BJ (cell line): ENCODE measurements at regions of chr3 and their contacts with region 1.

Region 1: DNA sequence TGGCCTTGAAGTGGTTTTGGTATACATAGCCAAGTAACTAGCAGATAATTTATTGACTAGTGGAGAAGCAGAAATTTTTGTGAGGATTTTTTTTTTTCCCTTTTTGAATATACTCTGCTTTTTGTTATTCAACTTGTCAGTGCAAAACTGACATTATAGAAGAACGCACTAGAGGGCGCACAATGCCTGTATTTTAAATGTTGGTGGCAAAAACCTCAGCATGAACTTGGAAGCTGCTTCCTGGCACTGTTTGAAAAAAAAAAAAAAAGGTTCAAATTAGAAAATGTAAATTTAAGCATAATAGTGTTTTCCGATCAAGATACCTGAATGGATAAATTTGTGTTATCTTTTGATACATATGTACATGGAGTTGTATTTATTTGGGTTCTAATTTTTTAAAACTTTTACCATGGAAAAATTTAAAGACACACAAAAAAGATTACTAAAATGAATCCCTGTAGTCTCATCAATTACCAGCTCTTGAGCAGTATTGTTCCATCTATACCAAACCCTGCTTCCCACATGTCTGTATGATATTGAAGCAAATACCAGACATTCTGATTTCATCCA is 56.0 kb downstream of the SLC25A26 start:
- DNase-seq: no peak
- H3K4me3 ChIP-seq: no peak overlapping the region
- H3K27me3 ChIP-seq: no peaks in the 10 kb centered on the region
- CTCF ChIP-seq: peak; percentile 55

Region 2: DNA sequence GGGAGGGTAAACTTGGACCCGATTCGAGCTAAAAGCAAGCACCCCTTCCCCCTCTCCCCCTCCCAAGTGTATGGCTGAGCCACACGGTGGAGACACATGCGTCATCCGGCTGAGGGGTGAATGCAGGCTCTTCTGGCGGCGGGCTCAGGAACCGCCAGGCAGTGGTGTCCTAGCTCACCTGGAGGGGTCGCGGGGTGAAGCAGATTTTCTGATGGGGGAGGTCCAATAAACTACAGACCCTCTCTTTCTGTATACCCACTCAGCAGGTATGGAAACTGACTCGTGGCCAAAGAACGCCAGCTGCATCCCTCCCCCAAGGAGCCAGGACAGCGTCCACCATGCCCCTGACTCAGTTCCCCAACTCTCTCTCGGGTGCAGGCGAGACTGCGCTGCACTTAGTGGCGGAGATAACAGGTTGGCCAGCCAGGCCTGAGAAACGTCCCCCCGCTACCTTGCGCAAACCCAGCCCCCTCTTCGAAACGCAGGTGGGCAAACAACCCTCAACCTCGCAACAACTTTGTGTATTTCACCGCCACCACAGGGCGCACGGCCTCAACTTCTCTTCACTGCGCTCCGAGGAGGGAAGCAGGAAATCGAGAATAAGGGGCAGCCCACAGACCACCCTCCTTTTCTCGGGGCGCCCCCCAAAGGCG is 239.3 kb before region 1 on chr3:
- CTCF ChIA-PET with region 1: no interaction called
- POLR2A ChIA-PET with region 1: no interaction called
- DNase-seq: no peak
- H3K4me3 ChIP-seq: peak overlapping the region; percentile 81
- H3K27me3 ChIP-seq: no peaks in the 10 kb centered on the region
- CTCF ChIP-seq: peak; percentile 46

Region 3: GRCh38 chr3:66133050-66133757 is 143.6 kb before region 1 on chr3:
- CTCF ChIA-PET with region 1: no interaction called
- POLR2A ChIA-PET with region 1: no interaction called
- DNase-seq: no peak
- H3K4me3 ChIP-seq: no peak overlapping the region
- H3K27me3 ChIP-seq: no peaks in the 10 kb centered on the region
- CTCF ChIP-seq: no peak

Region 4: DNA sequence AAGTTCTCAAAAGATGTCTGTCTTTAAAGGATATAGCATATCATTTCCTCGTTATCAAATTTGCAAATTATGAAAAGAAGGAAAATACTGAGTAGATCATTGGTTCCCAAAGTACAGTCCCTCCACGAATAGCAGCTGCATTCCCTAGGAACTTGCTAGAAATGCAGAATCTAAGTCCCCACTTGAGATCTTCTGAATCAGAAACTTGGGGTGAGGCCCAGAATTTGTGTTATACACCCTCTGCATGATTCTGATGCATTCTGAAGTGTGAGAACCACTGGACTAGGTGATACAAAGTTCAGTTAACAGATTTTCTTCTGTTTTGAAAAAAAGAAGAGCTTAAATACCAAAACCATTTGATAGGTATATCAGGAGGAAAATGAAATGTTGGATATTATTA is 21.1 kb after region 1 on chr3:
- CTCF ChIA-PET with region 1: no interaction called
- POLR2A ChIA-PET with region 1: interaction called, 10 read pairs
- DNase-seq: no peak
- H3K4me3 ChIP-seq: no peak overlapping the region
- H3K27me3 ChIP-seq: no peaks in the 10 kb centered on the region
- CTCF ChIP-seq: no peak

Region 5: GRCh38 chr3:66336333-66336766 is 59.6 kb after region 1 on chr3:
- CTCF ChIA-PET with region 1: no interaction called
- POLR2A ChIA-PET with region 1: no interaction called
- DNase-seq: peak; percentile 49
- H3K4me3 ChIP-seq: no peak overlapping the region
- H3K27me3 ChIP-seq: no peaks in the 10 kb centered on the region
- CTCF ChIP-seq: no peak

Region 6: GRCh38 chr3:66372681-66373350 is 96.0 kb after region 1 on chr3:
- CTCF ChIA-PET with region 1: interaction called, 11 read pairs
- POLR2A ChIA-PET with region 1: no interaction called
- DNase-seq: no peak
- H3K4me3 ChIP-seq: no peak overlapping the region
- H3K27me3 ChIP-seq: no peaks in the 10 kb centered on the region
- CTCF ChIP-seq: peak; percentile 38; the same call in 1 of the 2 replicates

Region 7: DNA sequence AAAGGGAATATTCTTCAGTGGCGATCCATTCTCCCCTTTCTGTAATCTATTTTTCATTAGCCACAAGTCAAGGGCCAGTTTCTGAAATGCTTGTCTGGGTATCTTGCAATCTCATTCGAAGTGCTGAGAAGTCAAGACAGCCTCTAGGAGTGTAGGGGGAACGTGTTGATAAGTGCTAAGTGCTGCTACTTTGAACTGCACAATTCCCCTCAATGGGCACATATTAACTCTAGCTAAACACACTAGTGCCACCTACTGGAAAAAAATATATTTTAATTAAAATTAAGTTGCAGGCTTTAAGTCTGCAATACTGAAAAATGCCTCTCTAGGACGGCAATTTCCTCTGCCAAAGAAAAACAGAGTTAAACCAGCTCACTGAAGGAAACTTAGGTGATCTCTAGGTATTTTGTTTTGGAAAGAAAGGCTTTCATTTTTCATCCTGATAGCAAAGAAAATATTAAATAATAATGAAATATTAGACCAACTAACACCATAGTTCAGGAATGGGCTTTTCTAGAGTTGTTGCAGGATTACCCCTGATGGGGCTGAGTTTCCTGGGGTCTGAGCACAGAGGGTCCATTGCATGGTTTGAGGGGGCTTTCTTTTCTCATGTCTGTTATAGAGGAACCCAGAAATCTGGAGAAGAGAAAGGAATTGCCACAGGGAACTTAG is 539.4 kb after region 1 on chr3:
- CTCF ChIA-PET with region 1: interaction called, 42 read pairs
- POLR2A ChIA-PET with region 1: no interaction called
- DNase-seq: no peak
- H3K4me3 ChIP-seq: no peak overlapping the region
- H3K27me3 ChIP-seq: peaks cover 2% of the 10 kb centered on the region
- CTCF ChIP-seq: peak; percentile 43